Activated CD4-positive, alpha-beta memory T cell treated with anti-CD3 and anti-CD28 coated beads for 36 hours (primary cell): ENCODE measurements at regions of chr17 and their contacts with region 1.

Region 1: DNA sequence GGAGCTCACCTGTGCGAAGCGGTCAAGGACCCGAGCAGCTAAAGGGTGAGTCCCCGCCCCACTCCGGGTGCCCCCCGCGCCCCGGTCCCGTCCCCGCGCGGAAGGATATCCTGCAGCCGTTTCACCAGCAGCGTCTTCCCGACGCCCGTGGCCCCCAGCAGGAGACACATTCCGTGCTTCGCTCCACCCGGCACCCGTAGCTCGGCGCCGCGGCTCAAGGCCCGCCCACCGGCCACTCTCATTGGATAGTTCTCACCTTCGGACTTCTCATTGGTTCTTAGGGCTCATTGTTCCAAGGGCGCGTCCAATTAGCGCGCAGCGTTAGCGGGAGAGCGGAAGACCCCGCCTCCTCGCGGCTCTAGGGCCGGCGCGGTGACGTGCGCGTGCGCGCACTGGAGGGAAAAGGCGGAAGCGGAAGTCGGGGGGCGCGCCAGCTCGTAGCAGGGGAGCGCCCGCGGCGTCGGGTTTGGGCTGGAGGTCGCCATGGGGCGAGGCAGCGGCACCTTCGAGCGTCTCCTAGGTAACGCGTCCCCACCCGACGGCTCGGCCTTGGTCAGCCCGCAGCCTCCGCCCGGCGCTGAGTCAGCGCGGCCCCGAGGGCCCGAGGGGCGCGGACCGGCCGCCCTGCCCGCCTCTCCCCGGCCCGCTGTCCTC is at the starts of genes ARL16 and HGS:
- DNase-seq: peak; percentile 99
- H3K4me3 Mint-ChIP-seq: peak within 1 kb of the TSS; percentile 86
- H3K27ac Mint-ChIP-seq: peak within 1 kb of the TSS; percentile 86
- H3K4me1 Mint-ChIP-seq: peaks cover 32% of the 10 kb centered on the region
- H3K27me3 Mint-ChIP-seq: peaks cover 2% of the 10 kb centered on the region
- total RNA-seq, gene ARL16: 15.1 to 17.1 TPM
- total RNA-seq, gene HGS: 96.9 to 111 TPM

Region 2: GRCh38 chr17:81607431-81607830 is 76.3 kb before region 1 on chr17:
- CTCF ChIA-PET with region 1: no interaction called
- POLR2A ChIA-PET with region 1: no interaction called
- intact Hi-C with region 1: no loop called
- DNase-seq: peak; percentile 23
- H3K4me3 Mint-ChIP-seq: no peak overlapping the region
- H3K27ac Mint-ChIP-seq: peak overlapping the region; percentile 45
- H3K4me1 Mint-ChIP-seq: peaks cover 8% of the 10 kb centered on the region
- H3K27me3 Mint-ChIP-seq: no peaks in the 10 kb centered on the region

Region 3: GRCh38 chr17:81702971-81703746 is 19.4 kb after region 1 on chr17 and contains the start of gene MRPL12:
- CTCF ChIA-PET with region 1: interaction called, 13 read pairs
- POLR2A ChIA-PET with region 1: interaction called, 54 read pairs
- intact Hi-C with region 1: loop called (anchors 2 kb)
- DNase-seq: peak; percentile 93
- H3K4me3 Mint-ChIP-seq: peak within 1 kb of the TSS; percentile 94
- H3K27ac Mint-ChIP-seq: peak within 1 kb of the TSS; percentile 92
- H3K4me1 Mint-ChIP-seq: peaks cover 31% of the 10 kb centered on the region
- H3K27me3 Mint-ChIP-seq: no peaks in the 10 kb centered on the region
- total RNA-seq, gene MRPL12: 112 to 118 TPM

Region 4: DNA sequence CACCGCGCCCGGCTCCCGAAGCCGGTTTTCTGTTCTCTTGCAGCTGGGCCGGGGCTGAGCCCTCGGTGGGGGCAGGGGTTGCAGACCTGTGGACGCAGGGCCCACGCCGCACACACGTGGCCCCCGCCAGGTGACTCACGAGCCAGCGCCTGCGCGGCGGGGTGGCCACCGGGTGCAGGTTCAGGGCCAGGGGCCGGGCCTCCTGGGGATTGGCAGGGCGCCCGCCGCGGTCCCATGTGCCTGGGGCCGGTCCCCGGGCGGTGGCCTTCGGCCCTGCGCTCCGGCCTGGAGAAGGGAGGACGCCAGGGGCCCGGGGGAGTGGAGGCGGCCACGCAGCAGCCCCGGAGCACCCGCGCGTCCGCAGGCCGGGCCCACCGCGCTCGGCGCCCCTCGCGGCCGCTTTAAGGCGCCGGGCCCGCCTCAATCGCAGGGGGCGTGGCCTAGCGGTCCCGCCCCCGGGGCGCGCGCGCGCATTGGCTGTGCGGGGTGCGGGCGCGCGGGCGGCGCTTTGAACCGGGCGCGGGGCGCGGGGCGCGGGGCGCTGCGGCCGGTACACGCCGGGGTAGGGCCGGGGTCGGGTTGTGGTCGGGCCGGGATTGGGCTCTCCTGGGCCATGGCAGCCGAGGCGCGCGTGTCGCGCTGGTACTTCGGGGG is 28.2 kb after region 1 on chr17 and contains the start of gene SLC25A10:
- CTCF ChIA-PET with region 1: no interaction called
- POLR2A ChIA-PET with region 1: interaction called, 12 read pairs
- intact Hi-C with region 1: no loop called
- DNase-seq: peak; percentile 90
- H3K4me3 Mint-ChIP-seq: peak within 1 kb of the TSS; percentile 76
- H3K27ac Mint-ChIP-seq: peak within 1 kb of the TSS; percentile 54
- H3K4me1 Mint-ChIP-seq: peaks cover 21% of the 10 kb centered on the region
- H3K27me3 Mint-ChIP-seq: no peaks in the 10 kb centered on the region
- total RNA-seq, gene SLC25A10: 25.1 to 25.7 TPM

Region 5: GRCh38 chr17:82292251-82293154 is 608.8 kb after region 1 on chr17:
- CTCF ChIA-PET with region 1: no interaction called
- POLR2A ChIA-PET with region 1: no interaction called
- intact Hi-C with region 1: no loop called
- DNase-seq: peak; percentile 96
- H3K4me3 Mint-ChIP-seq: peak overlapping the region; percentile 82
- H3K27ac Mint-ChIP-seq: peak overlapping the region; percentile 87
- H3K4me1 Mint-ChIP-seq: peaks cover 49% of the 10 kb centered on the region
- H3K27me3 Mint-ChIP-seq: no peaks in the 10 kb centered on the region